ENCODE measurements at regions of chr9 and their contacts with region 1.

Region 1: GRCh38 chr9:36190388-36191287 is at the start of gene CLTA:
- DNase-seq: peak; percentile 92 to 93
- H3K4me3 ChIP-seq: peak within 1 kb of the TSS; percentile 86 to 98 (median 97)
- H3K27ac ChIP-seq: peak within 1 kb of the TSS; percentile 89
- H3K4me1 ChIP-seq: peaks cover 6 to 12% (median 10%) of the 10 kb centered on the region in 4 experiments; a peak in 6 of 7 replicates
- H3K27me3 ChIP-seq: no peaks in the 10 kb centered on the region
- CTCF ChIP-seq: peak in 1 of 3 experiments; percentile 35; a peak in 1 of 4 replicates
- EP300 ChIP-seq: no peak
- POLR2A ChIP-seq: peak; percentile 92 to 97
- RAD21 ChIP-seq: no peak
- total RNA-seq, gene CLTA: 236 and 239 TPM in 2 replicates

Region 2: GRCh38 chr9:35935755-35936509 is 254.7 kb before region 1 on chr9:
- CTCF ChIA-PET with region 1: no interaction called
- POLR2A ChIA-PET with region 1: no interaction called
- DNase-seq: no peak
- H3K4me3 ChIP-seq: no peak overlapping the region
- H3K27ac ChIP-seq: no peak overlapping the region
- H3K4me1 ChIP-seq: no peaks in the 10 kb centered on the region
- H3K27me3 ChIP-seq: peaks cover 0 to 6% (median under 1%) of the 10 kb centered on the region in 4 experiments; a peak in 3 of 7 replicates
- CTCF ChIP-seq: no peak
- EP300 ChIP-seq: no peak
- POLR2A ChIP-seq: no peak
- RAD21 ChIP-seq: no peak

Region 3: DNA sequence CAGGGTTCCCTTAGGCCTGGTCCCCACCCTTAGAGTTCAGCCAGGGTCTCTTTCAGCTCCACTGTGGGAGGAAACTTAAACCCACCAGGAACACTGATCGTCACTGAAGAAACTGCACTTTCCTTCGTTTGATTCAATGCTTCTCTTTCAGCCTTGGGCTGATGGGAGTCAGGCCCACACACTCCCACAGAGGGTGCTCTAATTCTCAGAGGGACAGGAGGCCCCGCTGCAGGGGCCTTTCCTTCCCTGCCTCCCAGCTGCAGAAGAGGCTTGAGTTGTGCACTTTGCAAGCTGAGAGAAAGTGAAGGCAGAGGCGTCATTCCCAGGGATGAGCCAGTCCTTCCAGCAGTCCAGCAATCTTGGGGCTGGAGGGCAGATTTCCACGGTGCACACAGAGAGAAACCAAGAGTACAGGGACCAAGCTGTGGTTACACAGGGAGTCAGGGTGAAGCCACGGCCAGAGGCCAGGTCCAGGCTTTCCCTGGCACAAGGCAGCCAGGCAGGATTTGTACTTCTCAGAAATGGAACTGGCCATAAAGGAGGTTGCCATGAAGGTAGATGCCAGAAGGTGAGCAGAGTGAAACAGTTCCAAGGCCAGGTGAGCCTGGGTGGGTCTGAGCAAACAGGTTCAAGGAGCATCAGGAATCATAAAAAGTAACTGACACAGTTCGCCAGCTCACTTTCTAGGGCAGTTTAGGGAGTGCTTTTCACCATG is 64.5 kb before region 1 on chr9:
- CTCF ChIA-PET with region 1: no interaction called
- POLR2A ChIA-PET with region 1: no interaction called
- DNase-seq: no peak
- H3K4me3 ChIP-seq: no peak overlapping the region
- H3K27ac ChIP-seq: no peak overlapping the region
- H3K4me1 ChIP-seq: no peaks in the 10 kb centered on the region
- H3K27me3 ChIP-seq: no peaks in the 10 kb centered on the region
- CTCF ChIP-seq: no peak
- EP300 ChIP-seq: no peak
- POLR2A ChIP-seq: no peak
- RAD21 ChIP-seq: no peak

Region 4: DNA sequence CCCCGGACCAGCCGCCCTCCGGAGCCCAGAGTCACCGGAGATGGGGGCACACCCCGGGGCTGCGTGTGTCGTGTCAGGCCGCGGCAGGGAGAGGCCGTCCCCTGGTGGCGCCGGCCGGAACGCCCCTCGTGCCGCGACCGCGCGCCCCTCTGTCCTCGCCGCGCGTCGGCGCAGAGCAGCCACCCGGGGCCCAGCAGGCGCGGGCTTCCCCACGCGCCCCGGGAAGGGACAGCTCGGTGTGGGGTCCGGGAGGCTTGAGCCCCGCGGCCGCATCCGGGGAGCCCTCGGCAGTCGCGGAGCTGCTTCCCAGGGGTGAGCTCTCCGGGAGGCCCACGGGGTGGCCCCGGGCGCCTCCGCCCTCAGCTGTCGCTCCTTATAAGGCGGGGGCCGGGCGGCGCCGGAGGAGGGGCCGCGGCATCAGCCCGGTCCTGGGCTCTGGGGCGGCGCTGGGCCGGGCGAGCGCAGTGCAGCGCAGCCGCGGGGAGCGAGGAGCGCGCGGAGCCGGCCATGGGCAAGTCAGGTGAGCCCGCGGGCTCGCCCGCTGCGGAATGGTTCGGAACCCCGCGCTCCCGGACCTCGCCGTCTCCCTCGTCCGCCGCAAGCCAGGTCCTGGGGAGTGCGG is 54.3 kb before region 1 on chr9 and contains the start of gene GLIPR2:
- CTCF ChIA-PET with region 1: interaction called, 10 read pairs
- POLR2A ChIA-PET with region 1: interaction called, 4 read pairs
- DNase-seq: no peak
- H3K4me3 ChIP-seq: peak within 1 kb of the TSS; percentile 62 to 76 (median 70)
- H3K27ac ChIP-seq: no peak within 1 kb of the TSS
- H3K4me1 ChIP-seq: peaks cover 0 to 15% (median 7%) of the 10 kb centered on the region in 4 experiments; a peak in 6 of 7 replicates
- H3K27me3 ChIP-seq: peaks cover 18 to 58% (median 49%) of the 10 kb centered on the region in 4 experiments
- CTCF ChIP-seq: peak in 2 of 3 experiments; percentile 15 to 25; a peak in 2 of 4 replicates
- EP300 ChIP-seq: no peak
- POLR2A ChIP-seq: peak in 1 of 2 experiments; percentile 67; a peak in 2 of 3 replicates
- RAD21 ChIP-seq: peak in 1 of 2 experiments; percentile 18; a peak in 1 of 4 replicates
- total RNA-seq, gene GLIPR2: 7.9 and 8.9 TPM in 2 replicates

Region 5: GRCh38 chr9:36204906-36205547 is 14.4 kb after region 1 on chr9:
- CTCF ChIA-PET with region 1: interaction called, 12 read pairs
- POLR2A ChIA-PET with region 1: interaction called, 10 read pairs
- DNase-seq: no peak
- H3K4me3 ChIP-seq: no peak overlapping the region
- H3K27ac ChIP-seq: no peak overlapping the region
- H3K4me1 ChIP-seq: no peaks in the 10 kb centered on the region; a peak in 1 of 7 replicates
- H3K27me3 ChIP-seq: no peaks in the 10 kb centered on the region
- CTCF ChIP-seq: peak; percentile 40 to 67 (median 57); a peak in 3 of 4 replicates
- EP300 ChIP-seq: no peak
- POLR2A ChIP-seq: no peak
- RAD21 ChIP-seq: peak; percentile 43 to 62; a peak in 3 of 4 replicates

Measured in H1 (cell line).